SK-N-SH (cell line): ENCODE measurements at regions of chr11 and their contacts with region 1.

Region 1: GRCh38 chr11:61733120-61733978 is 19.1 kb upstream of the MYRF start:
- DNase-seq: peak; percentile 95
- H3K4me3 ChIP-seq: no peak overlapping the region; a peak in 1 of 4 replicates
- H3K27ac ChIP-seq: peak overlapping the region in 1 of 2 experiments; percentile 5; a peak in 1 of 4 replicates
- H3K4me1 ChIP-seq: peaks cover 0 to 5% of the 10 kb centered on the region in 2 experiments; a peak in 1 of 4 replicates
- H3K27me3 ChIP-seq: no peaks in the 10 kb centered on the region
- CTCF ChIP-seq: peak; percentile 96
- EP300 ChIP-seq: no peak
- RAD21 ChIP-seq: peak; percentile 97

Region 2: GRCh38 chr11:61639816-61640443 is 93.4 kb before region 1 on chr11:
- CTCF ChIA-PET with region 1: interaction called, 26 read pairs
- POLR2A ChIA-PET with region 1: no interaction called
- DNase-seq: no peak
- H3K4me3 ChIP-seq: no peak overlapping the region
- H3K27ac ChIP-seq: no peak overlapping the region
- H3K4me1 ChIP-seq: peaks cover 0 to 2% of the 10 kb centered on the region in 2 experiments; a peak in 1 of 4 replicates
- H3K27me3 ChIP-seq: no peaks in the 10 kb centered on the region; the same call in 1 of the 2 replicates
- CTCF ChIP-seq: no peak
- EP300 ChIP-seq: no peak
- RAD21 ChIP-seq: no peak

Region 3: GRCh38 chr11:61679893-61680621 is 53.3 kb before region 1 on chr11 and contains the start of gene DAGLA:
- CTCF ChIA-PET with region 1: interaction called, 53 read pairs
- POLR2A ChIA-PET with region 1: no interaction called
- DNase-seq: peak; percentile 99
- H3K4me3 ChIP-seq: peak within 1 kb of the TSS; percentile 59 to 63
- H3K27ac ChIP-seq: no peak within 1 kb of the TSS
- H3K4me1 ChIP-seq: peaks cover 0 to 14% of the 10 kb centered on the region in 2 experiments; a peak in 1 of 4 replicates
- H3K27me3 ChIP-seq: peaks cover 19% of the 10 kb centered on the region; the same call in 1 of the 2 replicates
- CTCF ChIP-seq: peak; percentile 71
- EP300 ChIP-seq: no peak
- RAD21 ChIP-seq: peak; percentile 64
- polyA plus RNA-seq, gene DAGLA: 2.7 and 3.3 TPM in 2 replicates

Region 4: DNA sequence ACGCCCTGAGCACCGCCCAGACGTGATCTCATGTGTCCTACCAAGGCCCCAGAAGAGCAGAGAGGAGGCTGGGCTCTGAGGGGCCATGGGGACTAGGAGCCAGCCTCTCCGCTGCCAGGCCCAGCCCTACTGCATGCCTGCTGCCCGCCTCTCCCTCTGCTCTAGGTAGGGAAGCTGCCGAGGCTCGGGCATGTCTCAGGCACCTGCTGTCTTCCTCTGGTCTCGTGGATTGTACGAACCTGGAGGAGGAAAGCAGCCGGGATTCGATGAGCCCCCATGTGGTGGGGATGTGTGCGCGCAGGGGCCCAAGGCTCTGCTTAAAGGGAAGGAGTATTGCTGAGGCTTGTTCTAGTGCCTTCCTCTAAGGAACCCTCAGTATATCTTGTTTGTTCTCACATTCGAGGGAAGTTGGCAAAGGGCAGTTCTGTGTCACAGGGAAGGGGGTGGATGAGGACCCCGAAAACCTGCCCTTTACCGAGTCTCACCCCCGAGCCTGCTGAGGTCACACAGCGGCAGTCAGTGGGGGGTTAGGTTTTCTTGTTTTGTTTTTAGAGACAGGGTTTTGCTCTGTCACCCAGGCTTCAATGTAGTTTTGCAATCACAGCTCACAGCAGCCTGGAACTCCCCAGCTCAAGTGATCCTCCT is 32.0 kb before region 1 on chr11:
- CTCF ChIA-PET with region 1: interaction called, 12 read pairs
- POLR2A ChIA-PET with region 1: no interaction called
- DNase-seq: peak; percentile 64
- H3K4me3 ChIP-seq: no peak overlapping the region; a peak in 1 of 4 replicates
- H3K27ac ChIP-seq: no peak overlapping the region
- H3K4me1 ChIP-seq: peaks cover 13 to 22% of the 10 kb centered on the region in 2 experiments; a peak in 3 of 4 replicates
- H3K27me3 ChIP-seq: no peaks in the 10 kb centered on the region
- CTCF ChIP-seq: peak; percentile 47
- EP300 ChIP-seq: no peak
- RAD21 ChIP-seq: peak; percentile 23; the same call in 1 of the 2 replicates

Region 5: GRCh38 chr11:61747192-61747966 is 14.0 kb after region 1 on chr11:
- CTCF ChIA-PET with region 1: interaction called, 55 read pairs
- POLR2A ChIA-PET with region 1: interaction called, 4 read pairs
- DNase-seq: peak; percentile 95
- H3K4me3 ChIP-seq: no peak overlapping the region; a peak in 1 of 4 replicates
- H3K27ac ChIP-seq: no peak overlapping the region; a peak in 1 of 4 replicates
- H3K4me1 ChIP-seq: peaks cover 0 to 11% of the 10 kb centered on the region in 2 experiments; a peak in 1 of 4 replicates
- H3K27me3 ChIP-seq: no peaks in the 10 kb centered on the region
- CTCF ChIP-seq: peak; percentile 87
- EP300 ChIP-seq: no peak
- RAD21 ChIP-seq: peak; percentile 79